Psoas muscle (tissue), 8 donors: ENCODE measurements at regions of chr17 and their contacts with region 1.

Region 1: GRCh38 chr17:19753049-19753444 is 4.9 kb upstream of the ALDH3A1 start:
- DNase-seq: peak; percentile 86 to 94
- ATAC-seq: peak; percentile 96 to 98 (median 98)
- H3K4me3 ChIP-seq: peak overlapping the region; percentile 53
- H3K27ac ChIP-seq: peak overlapping the region; percentile 92
- H3K4me1 ChIP-seq: peaks cover 14% of the 10 kb centered on the region
- H3K27me3 ChIP-seq: no peaks in the 10 kb centered on the region
- CTCF ChIP-seq: no peak

Region 2: GRCh38 chr17:19533718-19534561 is 219.1 kb before region 1 on chr17 and contains the start of gene SLC47A1:
- intact Hi-C with region 1: loop called in 1 of 2 experiments (anchors 5 kb)
- DNase-seq: peak; percentile 58 to 75
- ATAC-seq: peak; percentile 82 to 84 (median 82)
- H3K4me3 ChIP-seq: peak within 1 kb of the TSS; percentile 79
- H3K27ac ChIP-seq: peak within 1 kb of the TSS; percentile 82
- H3K4me1 ChIP-seq: peaks cover 31% of the 10 kb centered on the region
- H3K27me3 ChIP-seq: no peaks in the 10 kb centered on the region
- CTCF ChIP-seq: no peak
- total RNA-seq, gene SLC47A1: 27.7 to 57.3 (median 42.8) TPM

Region 3: GRCh38 chr17:19648475-19649406 is 104.3 kb before region 1 on chr17 and contains the start of gene ALDH3A2:
- intact Hi-C with region 1: loop called (anchors 2 to 5 kb)
- DNase-seq: peak; percentile 98
- ATAC-seq: peak; percentile 96 to 98 (median 96)
- H3K4me3 ChIP-seq: peak within 1 kb of the TSS; percentile 84
- H3K27ac ChIP-seq: peak within 1 kb of the TSS; percentile 94
- H3K4me1 ChIP-seq: peaks cover 40% of the 10 kb centered on the region
- H3K27me3 ChIP-seq: no peaks in the 10 kb centered on the region
- CTCF ChIP-seq: peak; percentile 16
- total RNA-seq, gene ALDH3A2: 57.6 to 229 (median 86.2) TPM

Region 4: DNA sequence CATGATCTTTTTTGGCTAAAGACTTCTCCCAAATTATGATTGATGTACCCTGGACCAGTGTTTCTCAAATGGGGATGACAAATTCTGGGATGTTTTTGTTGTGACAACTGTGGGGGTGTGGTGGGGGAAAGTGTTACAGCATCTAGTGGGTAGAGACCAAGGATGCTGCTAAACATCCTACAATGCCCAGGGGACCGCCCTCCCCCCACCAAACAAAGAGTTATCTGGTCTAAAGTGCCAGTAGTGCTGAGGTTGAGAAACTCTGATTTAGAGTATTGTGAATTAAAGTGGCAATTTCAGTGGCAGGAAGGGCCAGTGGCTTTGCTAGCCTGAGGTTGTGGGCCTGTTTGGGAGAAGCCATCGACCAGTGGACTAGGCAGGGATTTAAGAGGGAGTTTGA is 69.9 kb before region 1 on chr17:
- intact Hi-C with region 1: loop called in 1 of 2 experiments (anchors 5 kb)
- DNase-seq: no peak
- ATAC-seq: no peak
- H3K4me3 ChIP-seq: no peak overlapping the region
- H3K27ac ChIP-seq: no peak overlapping the region
- H3K4me1 ChIP-seq: no peaks in the 10 kb centered on the region
- H3K27me3 ChIP-seq: no peaks in the 10 kb centered on the region
- CTCF ChIP-seq: no peak